ENCODE measurements at regions of chr16 and their contacts with region 1.

Region 1: GRCh38 chr16:12067714-12068401 is 91.3 kb downstream of the SNX29 start:
- DNase-seq: peak in 11 of 14 experiments; percentile 18 to 83 (median 52)
- ATAC-seq: peak; percentile 92
- H3K4me3 ChIP-seq: no peak overlapping the region
- H3K4me3 Mint-ChIP-seq: no peak overlapping the region
- H3K27ac ChIP-seq: no peak overlapping the region
- H3K27ac Mint-ChIP-seq: no peak overlapping the region
- H3K4me1 ChIP-seq: peaks cover 5% of the 10 kb centered on the region
- H3K4me1 Mint-ChIP-seq: peaks cover 11% of the 10 kb centered on the region
- H3K27me3 ChIP-seq: no peaks in the 10 kb centered on the region
- H3K27me3 Mint-ChIP-seq: no peaks in the 10 kb centered on the region
- CTCF ChIP-seq: peak; percentile 94

Region 2: DNA sequence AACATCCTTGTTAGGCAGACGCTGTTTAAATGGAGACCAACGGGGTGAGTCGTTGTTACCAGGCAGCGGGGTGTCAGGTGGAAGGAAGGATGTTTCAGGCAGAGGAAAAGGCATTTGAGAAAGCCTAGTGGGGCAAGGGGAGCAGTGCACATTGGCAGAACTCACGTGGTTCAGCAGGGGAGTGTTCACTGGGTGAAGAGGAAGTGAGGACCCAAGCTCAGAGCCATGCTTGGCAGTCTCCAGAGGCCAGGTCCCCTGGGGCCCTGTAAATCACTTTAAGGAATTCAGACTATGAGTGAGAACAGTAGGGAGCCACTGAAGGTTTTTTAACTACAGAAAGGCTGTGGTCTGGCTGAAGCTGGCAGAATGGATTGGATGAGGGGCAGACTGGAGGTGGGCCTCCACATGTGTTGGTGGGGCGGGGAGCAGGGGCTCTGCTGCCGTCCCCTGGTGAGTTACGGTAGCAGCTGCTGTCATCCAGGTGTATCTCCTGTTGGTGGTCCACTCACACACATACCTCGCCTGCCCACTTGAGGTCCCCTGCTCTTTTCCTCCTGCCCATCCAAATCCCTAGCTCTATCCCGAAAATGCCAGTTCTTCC is 1118.4 kb before region 1 on chr16:
- CTCF ChIA-PET with region 1: no interaction called
- POLR2A ChIA-PET with region 1: no interaction called
- intact Hi-C with region 1: loop called in 1 of 2 experiments (anchors 5 kb)
- DNase-seq: peak in 12 of 14 experiments; percentile 21 to 75 (median 44)
- ATAC-seq: peak; percentile 87
- H3K4me3 ChIP-seq: no peak overlapping the region
- H3K4me3 Mint-ChIP-seq: peak overlapping the region; percentile 61
- H3K27ac ChIP-seq: no peak overlapping the region
- H3K27ac Mint-ChIP-seq: peak overlapping the region; percentile 38
- H3K4me1 ChIP-seq: peaks cover 51% of the 10 kb centered on the region
- H3K4me1 Mint-ChIP-seq: peaks cover 66% of the 10 kb centered on the region
- H3K27me3 ChIP-seq: no peaks in the 10 kb centered on the region
- H3K27me3 Mint-ChIP-seq: no peaks in the 10 kb centered on the region
- CTCF ChIP-seq: no peak

Region 3: GRCh38 chr16:11396241-11397048 is 671.4 kb before region 1 on chr16:
- CTCF ChIA-PET with region 1: no interaction called
- POLR2A ChIA-PET with region 1: no interaction called
- intact Hi-C with region 1: loop called (anchors 1 to 2 kb)
- DNase-seq: peak; percentile 38 to 78 (median 59)
- ATAC-seq: peak; percentile 74
- H3K4me3 ChIP-seq: no peak overlapping the region
- H3K4me3 Mint-ChIP-seq: no peak overlapping the region
- H3K27ac ChIP-seq: no peak overlapping the region
- H3K27ac Mint-ChIP-seq: no peak overlapping the region
- H3K4me1 ChIP-seq: peaks cover 6% of the 10 kb centered on the region
- H3K4me1 Mint-ChIP-seq: no peaks in the 10 kb centered on the region
- H3K27me3 ChIP-seq: no peaks in the 10 kb centered on the region
- H3K27me3 Mint-ChIP-seq: no peaks in the 10 kb centered on the region
- CTCF ChIP-seq: peak; percentile 99

Region 4: DNA sequence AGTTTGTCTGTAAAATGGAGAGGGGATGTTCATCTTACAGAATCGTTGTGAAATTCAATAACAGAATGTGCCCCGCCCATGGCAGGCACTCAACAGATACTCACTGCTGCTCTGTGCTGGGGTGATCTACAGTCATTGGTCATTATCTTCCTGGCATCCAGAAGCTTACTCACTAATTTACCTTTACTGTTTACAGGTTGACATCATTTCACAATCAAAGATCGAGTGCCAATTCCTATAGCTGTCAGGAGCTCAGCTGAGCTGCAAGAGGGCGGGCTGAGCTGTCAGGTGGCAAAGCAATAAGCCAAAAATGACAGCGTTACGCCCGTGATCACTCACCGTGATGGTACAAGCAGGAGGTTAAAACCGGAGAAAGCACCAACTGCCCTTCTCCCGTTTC is 532.4 kb before region 1 on chr16:
- CTCF ChIA-PET with region 1: interaction called, 4 read pairs
- POLR2A ChIA-PET with region 1: no interaction called
- intact Hi-C with region 1: loop called in 1 of 2 experiments (anchors 5 kb)
- DNase-seq: no peak
- ATAC-seq: no peak
- H3K4me3 ChIP-seq: no peak overlapping the region
- H3K4me3 Mint-ChIP-seq: no peak overlapping the region
- H3K27ac ChIP-seq: no peak overlapping the region
- H3K27ac Mint-ChIP-seq: no peak overlapping the region
- H3K4me1 ChIP-seq: peaks cover 5% of the 10 kb centered on the region
- H3K4me1 Mint-ChIP-seq: peaks cover 16% of the 10 kb centered on the region
- H3K27me3 ChIP-seq: no peaks in the 10 kb centered on the region
- H3K27me3 Mint-ChIP-seq: no peaks in the 10 kb centered on the region
- CTCF ChIP-seq: no peak

Region 5: DNA sequence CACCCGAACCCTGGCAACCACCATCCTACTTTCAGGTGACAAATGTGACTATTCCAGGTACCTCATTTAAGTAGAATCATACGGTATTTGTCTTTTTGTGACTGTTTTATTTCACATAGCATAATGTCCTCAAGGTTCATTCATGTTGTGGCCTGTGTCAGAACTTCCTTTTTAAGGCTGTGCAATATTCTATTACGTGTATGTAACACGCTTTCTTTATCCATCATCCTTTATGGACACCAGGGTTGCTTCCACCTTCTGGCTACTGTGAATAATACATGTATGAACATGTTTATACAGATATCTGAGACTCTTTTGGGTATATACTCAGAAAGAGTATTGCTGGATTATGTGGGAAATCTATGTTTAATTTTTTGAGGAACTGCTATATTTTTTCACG is 187.9 kb before region 1 on chr16:
- CTCF ChIA-PET with region 1: no interaction called
- POLR2A ChIA-PET with region 1: no interaction called
- intact Hi-C with region 1: loop called in 1 of 2 experiments (anchors 10 kb)
- DNase-seq: peak in 1 of 14 experiments; percentile 6
- ATAC-seq: peak; percentile 43
- H3K4me3 ChIP-seq: no peak overlapping the region
- H3K4me3 Mint-ChIP-seq: no peak overlapping the region
- H3K27ac ChIP-seq: no peak overlapping the region
- H3K27ac Mint-ChIP-seq: peak overlapping the region; percentile 25
- H3K4me1 ChIP-seq: no peaks in the 10 kb centered on the region
- H3K4me1 Mint-ChIP-seq: peaks cover 4% of the 10 kb centered on the region
- H3K27me3 ChIP-seq: no peaks in the 10 kb centered on the region
- H3K27me3 Mint-ChIP-seq: no peaks in the 10 kb centered on the region
- CTCF ChIP-seq: no peak

Region 6: DNA sequence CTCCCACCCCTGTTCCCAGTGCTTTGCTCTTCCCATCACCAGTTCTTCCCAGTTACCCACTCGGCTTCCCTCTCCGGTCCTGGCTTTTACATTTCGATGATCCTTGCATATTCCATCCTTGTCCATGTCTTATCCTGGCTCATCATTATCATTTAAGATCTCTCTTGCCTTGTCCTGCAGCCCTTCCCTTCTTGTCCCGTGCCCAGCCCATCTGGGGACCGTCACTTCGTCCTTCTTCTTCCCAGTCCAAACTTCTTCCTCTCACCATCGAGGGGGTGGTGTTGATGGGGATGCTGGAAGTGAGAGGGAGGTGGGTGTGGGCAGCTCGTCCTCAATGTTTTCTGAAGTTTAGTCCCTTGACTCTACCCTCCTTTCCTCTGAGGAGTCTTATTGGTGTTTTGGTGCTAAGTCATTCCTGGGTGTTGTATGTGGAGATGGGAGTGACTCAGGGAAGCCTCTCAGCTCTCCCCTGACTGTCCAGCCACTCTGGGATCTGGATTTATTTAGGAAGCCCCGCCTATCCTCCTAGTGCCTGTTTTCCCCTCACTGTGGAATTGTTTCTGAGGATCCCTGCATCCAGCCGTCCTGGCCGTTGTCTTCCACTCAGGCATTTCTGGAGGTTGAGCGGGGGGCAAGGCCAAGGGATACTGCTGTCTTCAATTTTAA is 90.3 kb before region 1 on chr16:
- CTCF ChIA-PET with region 1: interaction called, 4 read pairs
- POLR2A ChIA-PET with region 1: interaction called, 4 read pairs
- intact Hi-C with region 1: loop called (anchors 5 to 10 kb)
- DNase-seq: peak in 2 of 14 experiments; percentile 7 to 9
- ATAC-seq: no peak
- H3K4me3 ChIP-seq: peak overlapping the region; percentile 99
- H3K4me3 Mint-ChIP-seq: peak overlapping the region; percentile 96
- H3K27ac ChIP-seq: no peak overlapping the region
- H3K27ac Mint-ChIP-seq: peak overlapping the region; percentile 81
- H3K4me1 ChIP-seq: peaks cover 25% of the 10 kb centered on the region
- H3K4me1 Mint-ChIP-seq: peaks cover 40% of the 10 kb centered on the region
- H3K27me3 ChIP-seq: no peaks in the 10 kb centered on the region
- H3K27me3 Mint-ChIP-seq: no peaks in the 10 kb centered on the region
- CTCF ChIP-seq: no peak

Region 7: GRCh38 chr16:12095275-12096156 is 27.7 kb after region 1 on chr16:
- CTCF ChIA-PET with region 1: interaction called, 11 read pairs
- POLR2A ChIA-PET with region 1: no interaction called
- intact Hi-C with region 1: no loop called
- DNase-seq: peak; percentile 48 to 83 (median 60)
- ATAC-seq: peak; percentile 54
- H3K4me3 ChIP-seq: no peak overlapping the region
- H3K4me3 Mint-ChIP-seq: peak overlapping the region; percentile 77
- H3K27ac ChIP-seq: no peak overlapping the region
- H3K27ac Mint-ChIP-seq: no peak overlapping the region
- H3K4me1 ChIP-seq: peaks cover 14% of the 10 kb centered on the region
- H3K4me1 Mint-ChIP-seq: peaks cover 50% of the 10 kb centered on the region
- H3K27me3 ChIP-seq: no peaks in the 10 kb centered on the region
- H3K27me3 Mint-ChIP-seq: no peaks in the 10 kb centered on the region
- CTCF ChIP-seq: peak; percentile 94